ENCODE measurements at regions of chr2 and their contacts with region 1.

Region 1: GRCh38 chr2:71226965-71227560 is at the start of gene PAIP2B:
- DNase-seq: peak; percentile 89
- ATAC-seq: peak; percentile 92
- H3K4me3 Mint-ChIP-seq: peak within 1 kb of the TSS; percentile 99
- H3K27ac Mint-ChIP-seq: peak within 1 kb of the TSS; percentile 95
- H3K4me1 Mint-ChIP-seq: peaks cover 28% of the 10 kb centered on the region
- H3K27me3 Mint-ChIP-seq: peaks cover 9% of the 10 kb centered on the region
- CTCF ChIP-seq: no peak
- total RNA-seq, gene PAIP2B: 3.7 and 4.0 TPM in 2 replicates

Region 2: GRCh38 chr2:71049365-71050360 is 177.4 kb before region 1 on chr2:
- CTCF ChIA-PET with region 1: no interaction called
- POLR2A ChIA-PET with region 1: no interaction called
- intact Hi-C with region 1: no loop called
- DNase-seq: no peak
- ATAC-seq: peak; percentile 82
- H3K4me3 Mint-ChIP-seq: no peak overlapping the region
- H3K27ac Mint-ChIP-seq: no peak overlapping the region
- H3K4me1 Mint-ChIP-seq: peaks cover 7% of the 10 kb centered on the region
- H3K27me3 Mint-ChIP-seq: no peaks in the 10 kb centered on the region
- CTCF ChIP-seq: no peak

Region 3: DNA sequence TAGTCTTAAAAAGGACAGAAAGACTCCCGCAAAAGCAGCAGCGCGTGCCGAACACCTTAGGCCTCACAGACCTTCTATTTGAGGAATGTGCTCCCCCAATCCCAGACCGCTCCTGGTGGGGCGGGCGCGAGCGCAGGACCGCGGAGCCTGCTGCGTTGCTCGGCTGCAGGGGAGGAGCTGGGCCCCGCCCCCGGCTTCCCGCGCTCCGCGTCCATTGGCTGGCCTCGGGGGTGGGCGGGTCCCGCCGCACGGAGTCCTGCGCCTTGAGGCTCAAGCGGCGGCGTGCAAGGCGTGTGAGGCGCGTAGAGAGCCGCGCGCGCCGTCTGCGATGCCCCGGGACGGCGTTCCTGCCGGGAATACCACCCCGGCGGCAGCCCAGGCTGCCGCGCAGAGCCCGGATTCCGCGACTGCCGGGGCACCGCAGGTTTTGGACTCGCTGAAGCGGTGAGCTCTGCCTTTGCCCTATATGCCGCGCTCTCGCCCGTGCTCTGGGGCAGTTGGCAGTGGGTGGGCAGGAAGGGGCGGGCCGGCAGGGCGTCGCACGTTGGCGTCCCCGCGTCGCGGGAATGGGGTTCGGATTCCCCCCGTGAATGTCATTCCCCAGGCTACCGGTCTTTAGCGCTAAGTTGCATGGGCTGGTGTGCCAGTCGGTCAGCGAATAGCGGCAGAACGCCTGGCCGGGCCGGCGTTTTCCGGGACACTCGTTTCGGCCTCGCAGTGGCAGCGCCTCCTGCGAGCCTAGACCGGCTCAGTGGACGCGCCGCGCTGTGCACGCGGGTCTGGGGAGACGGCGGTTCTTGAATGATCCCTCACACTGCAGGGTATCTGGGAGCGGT is 49.5 kb after region 1 on chr2:
- CTCF ChIA-PET with region 1: no interaction called
- POLR2A ChIA-PET with region 1: interaction called, 8 read pairs
- intact Hi-C with region 1: loop called (anchors 1 kb)
- DNase-seq: peak; percentile 90
- ATAC-seq: peak; percentile 99
- H3K4me3 Mint-ChIP-seq: peak overlapping the region; percentile 84
- H3K27ac Mint-ChIP-seq: no peak overlapping the region
- H3K4me1 Mint-ChIP-seq: peaks cover 12% of the 10 kb centered on the region
- H3K27me3 Mint-ChIP-seq: peaks cover 47% of the 10 kb centered on the region
- CTCF ChIP-seq: no peak

Region 4: GRCh38 chr2:71291398-71291797 is 64.3 kb after region 1 on chr2:
- CTCF ChIA-PET with region 1: no interaction called
- POLR2A ChIA-PET with region 1: no interaction called
- intact Hi-C with region 1: no loop called
- DNase-seq: no peak
- ATAC-seq: no peak
- H3K4me3 Mint-ChIP-seq: no peak overlapping the region
- H3K27ac Mint-ChIP-seq: no peak overlapping the region
- H3K4me1 Mint-ChIP-seq: no peaks in the 10 kb centered on the region
- H3K27me3 Mint-ChIP-seq: peaks cover 2% of the 10 kb centered on the region
- CTCF ChIP-seq: no peak

Measured in activated B cell treated with CpG ODN at 0.5 μM for 24 hours (primary cell).